ENCODE measurements at regions of chr18 and their contacts with region 1.

Region 1: GRCh38 chr18:23163786-23164533 is 28.7 kb downstream of the CABLES1 start:
- DNase-seq: no peak
- CTCF ChIP-seq: no peak

Region 2: DNA sequence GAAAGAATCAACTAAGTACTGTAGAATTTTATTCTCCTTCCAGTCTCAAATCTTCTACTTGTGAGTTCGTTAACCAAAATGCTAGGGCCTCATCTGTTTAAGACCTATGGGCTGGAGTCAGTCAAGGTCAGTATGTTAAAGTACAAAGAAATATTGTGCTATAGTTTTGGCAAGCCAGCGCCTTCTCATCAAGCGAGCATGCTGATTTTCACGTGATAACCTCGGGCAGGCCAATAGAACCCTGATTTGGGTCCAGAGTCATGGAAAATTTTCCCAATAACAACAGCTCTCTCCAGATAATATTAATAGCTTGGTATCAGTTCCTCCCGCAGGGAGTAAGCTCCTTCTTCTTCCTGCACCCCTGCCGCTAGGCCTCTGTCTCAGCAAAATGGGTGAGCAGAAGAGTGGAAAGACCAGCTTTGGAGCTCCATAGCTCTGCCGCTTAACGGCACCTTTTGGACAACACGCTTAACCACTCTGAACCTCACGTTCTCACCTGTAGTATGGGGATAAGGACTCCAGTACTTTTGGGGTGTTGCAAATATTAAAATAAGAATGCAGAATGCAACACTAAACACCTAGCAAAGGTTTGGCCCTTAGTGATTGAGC is 17.0 kb before region 1 on chr18:
- CTCF ChIA-PET with region 1: interaction called, 10 read pairs
- POLR2A ChIA-PET with region 1: no interaction called
- DNase-seq: no peak
- CTCF ChIP-seq: no peak

Region 3: GRCh38 chr18:23401400-23402347 is 237.7 kb after region 1 on chr18:
- CTCF ChIA-PET with region 1: no interaction called
- POLR2A ChIA-PET with region 1: no interaction called
- DNase-seq: no peak
- CTCF ChIP-seq: no peak